CD8-positive, alpha-beta T cell (primary cell): ENCODE measurements at regions of chr17 and their contacts with region 1.

Region 1: DNA sequence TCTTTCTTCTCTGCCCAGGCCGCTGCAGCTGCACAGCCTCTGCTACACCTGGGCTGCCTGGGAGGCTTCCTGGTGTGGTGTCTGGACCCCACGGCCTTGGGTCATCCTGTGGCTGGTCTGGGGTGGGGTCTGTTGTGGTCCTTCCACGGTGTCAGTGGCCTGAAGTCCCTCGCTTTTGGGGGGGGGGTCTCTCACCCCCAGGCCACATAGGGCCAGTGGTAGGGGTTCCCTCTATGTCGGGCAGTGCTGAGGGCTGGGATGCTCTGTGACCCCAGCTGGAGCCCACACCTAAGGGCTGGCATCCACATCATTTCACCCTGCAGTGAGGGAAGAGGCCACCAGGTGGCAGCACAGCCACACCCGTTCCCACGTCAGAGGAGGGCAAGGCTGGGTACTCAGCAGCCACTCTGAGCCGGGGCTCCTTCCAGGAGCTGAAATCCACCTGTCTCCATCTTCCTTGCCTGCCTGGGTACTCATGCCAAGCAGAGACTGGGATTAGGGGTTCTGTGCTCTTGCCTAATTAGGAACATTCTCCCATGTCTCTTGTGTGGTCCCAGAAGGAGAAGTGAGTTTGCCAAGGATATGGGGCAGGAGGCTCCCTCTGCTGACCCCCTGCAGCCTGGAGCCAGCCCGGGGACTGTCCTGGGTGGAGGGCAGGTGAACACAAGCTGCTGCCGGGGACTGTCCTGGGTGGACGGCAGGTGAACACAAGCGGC is 13.0 kb downstream of the ENGASE start:
- DNase-seq: peak; percentile 59 to 77 (median 68)
- ATAC-seq: peak; percentile 95
- H3K4me3 ChIP-seq: no peak overlapping the region
- H3K4me3 Mint-ChIP-seq: no peak overlapping the region
- H3K27ac ChIP-seq: no peak overlapping the region
- H3K27ac Mint-ChIP-seq: no peak overlapping the region
- H3K4me1 ChIP-seq: no peaks in the 10 kb centered on the region
- H3K4me1 Mint-ChIP-seq: no peaks in the 10 kb centered on the region
- H3K27me3 ChIP-seq: no peaks in the 10 kb centered on the region
- H3K27me3 Mint-ChIP-seq: peaks cover 4% of the 10 kb centered on the region
- CTCF ChIP-seq: peak; percentile 86

Region 2: DNA sequence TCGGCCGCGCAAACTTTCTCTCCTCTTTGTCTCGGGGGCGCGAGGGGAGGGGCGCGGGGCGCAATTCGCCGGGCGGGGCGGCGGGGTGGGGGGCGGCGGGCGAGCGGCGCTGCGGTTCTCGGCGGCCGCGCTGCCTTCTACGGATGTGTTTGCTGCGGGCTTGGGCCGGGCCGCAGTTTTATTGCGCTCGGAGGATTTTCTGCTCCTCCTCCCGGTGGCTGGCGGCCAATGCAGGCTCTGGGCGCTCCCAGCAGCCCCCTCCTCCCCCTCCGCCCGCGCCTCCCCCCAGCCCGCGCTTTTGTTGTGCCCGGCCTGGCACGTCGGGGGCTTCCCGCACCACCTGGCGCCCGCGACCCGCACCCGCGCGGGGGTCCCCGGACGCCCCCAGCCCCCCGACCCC is 162.4 kb before region 1 on chr17 and contains the start of gene TIMP2:
- CTCF ChIA-PET with region 1: no interaction called
- POLR2A ChIA-PET with region 1: no interaction called
- intact Hi-C with region 1: no loop called
- DNase-seq: peak; percentile 46 to 85 (median 74)
- ATAC-seq: peak; percentile 83
- H3K4me3 ChIP-seq: peak within 1 kb of the TSS; percentile 45 to 55
- H3K4me3 Mint-ChIP-seq: peak within 1 kb of the TSS; percentile 80
- H3K27ac ChIP-seq: no peak within 1 kb of the TSS
- H3K27ac Mint-ChIP-seq: no peak within 1 kb of the TSS
- H3K4me1 ChIP-seq: peaks cover 13% of the 10 kb centered on the region
- H3K4me1 Mint-ChIP-seq: peaks cover 11% of the 10 kb centered on the region
- H3K27me3 ChIP-seq: peaks cover 0 to 3% of the 10 kb centered on the region in 2 experiments
- H3K27me3 Mint-ChIP-seq: peaks cover 5% of the 10 kb centered on the region
- CTCF ChIP-seq: peak; percentile 36
- total RNA-seq, gene TIMP2: 8.9 to 9.4 TPM

Region 3: GRCh38 chr17:79065105-79065670 is 22.4 kb before region 1 on chr17:
- CTCF ChIA-PET with region 1: interaction called, 39 read pairs
- POLR2A ChIA-PET with region 1: no interaction called
- intact Hi-C with region 1: loop called (anchors 1 kb)
- DNase-seq: peak; percentile 22 to 71 (median 57)
- ATAC-seq: peak; percentile 73
- H3K4me3 ChIP-seq: no peak overlapping the region
- H3K4me3 Mint-ChIP-seq: no peak overlapping the region
- H3K27ac ChIP-seq: no peak overlapping the region
- H3K27ac Mint-ChIP-seq: no peak overlapping the region
- H3K4me1 ChIP-seq: peaks cover 3% of the 10 kb centered on the region
- H3K4me1 Mint-ChIP-seq: peaks cover 3% of the 10 kb centered on the region
- H3K27me3 ChIP-seq: no peaks in the 10 kb centered on the region
- H3K27me3 Mint-ChIP-seq: no peaks in the 10 kb centered on the region
- CTCF ChIP-seq: peak; percentile 72

Region 4: DNA sequence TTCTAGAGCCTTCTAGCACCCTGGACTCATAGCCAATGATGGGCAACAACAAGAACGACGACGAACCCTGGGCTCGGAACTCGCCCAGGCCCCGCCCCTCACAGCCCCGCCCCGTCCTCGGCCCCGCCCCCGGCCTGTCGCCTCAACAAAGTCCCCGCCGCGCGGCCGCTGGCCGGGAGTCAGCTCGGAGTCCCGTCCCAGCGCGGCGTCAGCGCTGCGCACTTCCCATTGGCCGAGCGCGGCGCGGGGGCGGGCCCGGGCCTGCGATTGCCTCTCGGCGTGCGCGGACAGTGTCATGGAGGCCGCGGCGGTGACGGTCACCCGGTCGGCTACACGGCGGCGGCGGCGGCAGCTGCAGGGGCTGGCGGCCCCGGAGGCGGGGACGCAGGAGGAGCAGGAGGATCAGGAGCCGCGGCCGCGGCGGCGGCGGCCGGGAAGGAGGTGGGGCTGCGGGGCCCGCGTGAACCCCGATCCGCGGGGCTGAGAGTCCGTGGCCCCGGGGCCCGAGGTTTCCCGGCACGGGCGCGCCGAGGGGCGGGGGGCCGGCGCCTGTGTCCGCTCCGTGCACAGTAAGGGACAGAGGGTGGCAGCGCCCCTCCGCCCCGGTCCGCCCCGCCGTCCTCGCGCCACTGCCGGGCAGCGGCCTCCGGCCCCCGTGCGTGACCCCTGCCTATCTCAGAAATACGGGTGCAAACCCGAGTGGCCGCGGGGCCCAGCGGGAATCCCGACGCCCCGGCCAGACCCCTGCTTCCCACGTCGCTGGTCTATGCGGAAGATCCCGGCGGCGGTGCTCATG is 12.7 kb before region 1 on chr17 and contains the start of gene ENGASE:
- CTCF ChIA-PET with region 1: interaction called, 24 read pairs
- POLR2A ChIA-PET with region 1: interaction called, 3 read pairs
- intact Hi-C with region 1: no loop called
- DNase-seq: peak; percentile 80 to 95 (median 89)
- ATAC-seq: peak; percentile 96
- H3K4me3 ChIP-seq: peak within 1 kb of the TSS; percentile 52 to 71
- H3K4me3 Mint-ChIP-seq: peak within 1 kb of the TSS; percentile 94
- H3K27ac ChIP-seq: peak within 1 kb of the TSS; percentile 48 to 63
- H3K27ac Mint-ChIP-seq: peak within 1 kb of the TSS; percentile 90
- H3K4me1 ChIP-seq: peaks cover 16% of the 10 kb centered on the region
- H3K4me1 Mint-ChIP-seq: peaks cover 19% of the 10 kb centered on the region
- H3K27me3 ChIP-seq: no peaks in the 10 kb centered on the region
- H3K27me3 Mint-ChIP-seq: no peaks in the 10 kb centered on the region
- CTCF ChIP-seq: no peak
- total RNA-seq, gene ENGASE: 84.1 to 92.8 TPM

Region 5: GRCh38 chr17:79102214-79102613 is 14.6 kb after region 1 on chr17:
- CTCF ChIA-PET with region 1: interaction called, 13 read pairs
- POLR2A ChIA-PET with region 1: no interaction called
- intact Hi-C with region 1: no loop called
- DNase-seq: no peak
- ATAC-seq: no peak
- H3K4me3 ChIP-seq: no peak overlapping the region
- H3K4me3 Mint-ChIP-seq: no peak overlapping the region
- H3K27ac ChIP-seq: no peak overlapping the region
- H3K27ac Mint-ChIP-seq: no peak overlapping the region
- H3K4me1 ChIP-seq: no peaks in the 10 kb centered on the region
- H3K4me1 Mint-ChIP-seq: peaks cover 4% of the 10 kb centered on the region
- H3K27me3 ChIP-seq: peaks cover 0 to 9% of the 10 kb centered on the region in 2 experiments
- H3K27me3 Mint-ChIP-seq: peaks cover 24% of the 10 kb centered on the region
- CTCF ChIP-seq: no peak

Region 6: DNA sequence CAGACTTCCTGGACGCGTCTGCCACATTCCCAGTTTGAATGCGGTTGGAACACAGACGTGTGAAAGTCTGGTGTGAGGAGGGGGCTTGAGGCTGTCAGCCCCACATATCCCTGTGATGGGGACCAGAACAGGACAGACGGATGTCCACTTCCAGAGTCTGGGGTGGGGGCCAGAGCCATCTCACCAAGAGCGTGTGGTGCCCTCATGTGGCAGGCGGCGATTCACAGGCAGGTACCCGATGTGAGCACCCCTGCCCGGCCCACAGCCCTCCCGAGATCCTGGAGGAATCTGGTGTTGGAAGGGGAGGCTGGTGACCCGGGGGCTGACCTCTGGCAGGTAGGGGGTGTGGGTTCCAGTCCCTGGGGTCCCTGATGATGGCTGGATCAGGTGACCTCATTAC is 38.6 kb after region 1 on chr17:
- CTCF ChIA-PET with region 1: no interaction called
- POLR2A ChIA-PET with region 1: no interaction called
- intact Hi-C with region 1: no loop called
- DNase-seq: no peak
- ATAC-seq: no peak
- H3K4me3 ChIP-seq: no peak overlapping the region
- H3K4me3 Mint-ChIP-seq: no peak overlapping the region
- H3K27ac ChIP-seq: no peak overlapping the region
- H3K27ac Mint-ChIP-seq: no peak overlapping the region
- H3K4me1 ChIP-seq: no peaks in the 10 kb centered on the region
- H3K4me1 Mint-ChIP-seq: no peaks in the 10 kb centered on the region
- H3K27me3 ChIP-seq: no peaks in the 10 kb centered on the region
- H3K27me3 Mint-ChIP-seq: peaks cover 2% of the 10 kb centered on the region
- CTCF ChIP-seq: no peak

Region 7: GRCh38 chr17:79382322-79382721 is 294.7 kb after region 1 on chr17:
- CTCF ChIA-PET with region 1: interaction called, 12 read pairs
- POLR2A ChIA-PET with region 1: no interaction called
- intact Hi-C with region 1: no loop called
- DNase-seq: no peak
- ATAC-seq: no peak
- H3K4me3 ChIP-seq: no peak overlapping the region
- H3K4me3 Mint-ChIP-seq: no peak overlapping the region
- H3K27ac ChIP-seq: no peak overlapping the region
- H3K27ac Mint-ChIP-seq: no peak overlapping the region
- H3K4me1 ChIP-seq: no peaks in the 10 kb centered on the region
- H3K4me1 Mint-ChIP-seq: no peaks in the 10 kb centered on the region
- H3K27me3 ChIP-seq: no peaks in the 10 kb centered on the region
- H3K27me3 Mint-ChIP-seq: peaks cover 15% of the 10 kb centered on the region
- CTCF ChIP-seq: no peak

Region 8: DNA sequence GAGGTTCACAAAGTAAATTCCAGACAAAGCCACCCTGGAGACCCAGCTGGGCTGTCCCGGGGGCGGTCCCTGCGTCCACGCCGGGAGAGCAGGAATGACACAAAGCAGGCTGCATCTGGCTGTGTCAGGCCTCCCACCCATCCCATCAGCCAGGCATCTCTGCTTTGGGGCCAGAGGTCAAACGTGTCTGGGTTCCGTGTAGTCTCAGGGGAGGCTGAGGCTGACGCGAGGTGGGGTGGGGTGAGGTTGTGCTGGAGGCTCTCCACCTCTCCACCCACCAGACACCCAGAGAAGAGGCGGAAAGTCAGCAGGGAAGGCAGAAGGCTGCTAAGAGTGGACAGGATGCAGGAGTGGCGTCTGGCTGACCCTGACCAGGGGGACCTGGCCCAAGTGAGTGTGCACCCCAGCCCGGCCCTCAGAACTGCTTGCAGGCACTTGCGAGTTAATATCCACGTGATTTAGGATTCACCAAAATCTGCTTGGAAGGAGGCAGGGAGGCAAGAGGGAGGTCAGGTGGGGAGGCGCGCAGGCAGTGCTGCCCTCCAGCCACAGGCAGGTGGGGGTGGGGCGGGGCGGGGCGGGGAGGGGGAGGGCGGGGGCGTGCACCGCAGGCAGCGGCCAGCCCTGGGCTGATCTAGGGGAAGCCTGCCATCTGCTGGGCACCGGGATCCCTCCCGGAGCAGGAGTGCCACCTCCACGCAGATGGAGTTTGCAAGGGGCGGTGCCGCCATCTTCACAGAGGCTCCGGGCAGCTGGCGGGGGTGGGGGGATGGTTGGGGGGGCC is 903.7 kb after region 1 on chr17:
- CTCF ChIA-PET with region 1: no interaction called
- POLR2A ChIA-PET with region 1: no interaction called
- intact Hi-C with region 1: loop called in 1 of 2 experiments (anchors 10 kb)
- DNase-seq: peak; percentile 70 to 91 (median 86)
- ATAC-seq: peak; percentile 93
- H3K4me3 ChIP-seq: peak overlapping the region; percentile 69 to 71
- H3K4me3 Mint-ChIP-seq: peak overlapping the region; percentile 80
- H3K27ac ChIP-seq: peak overlapping the region in 1 of 2 experiments; percentile 30
- H3K27ac Mint-ChIP-seq: no peak overlapping the region
- H3K4me1 ChIP-seq: peaks cover 36% of the 10 kb centered on the region
- H3K4me1 Mint-ChIP-seq: peaks cover 41% of the 10 kb centered on the region
- H3K27me3 ChIP-seq: peaks cover 0 to 9% of the 10 kb centered on the region in 2 experiments
- H3K27me3 Mint-ChIP-seq: no peaks in the 10 kb centered on the region
- CTCF ChIP-seq: peak; percentile 61